Right ventricle myocardium inferior (tissue), 1 donor: ENCODE measurements at regions of chr11 and their contacts with region 1.

Region 1: GRCh38 chr11:86559311-86559945 is 113.0 kb downstream of the ME3 start:
- DNase-seq: no peak
- ATAC-seq: peak; percentile 75

Region 2: DNA sequence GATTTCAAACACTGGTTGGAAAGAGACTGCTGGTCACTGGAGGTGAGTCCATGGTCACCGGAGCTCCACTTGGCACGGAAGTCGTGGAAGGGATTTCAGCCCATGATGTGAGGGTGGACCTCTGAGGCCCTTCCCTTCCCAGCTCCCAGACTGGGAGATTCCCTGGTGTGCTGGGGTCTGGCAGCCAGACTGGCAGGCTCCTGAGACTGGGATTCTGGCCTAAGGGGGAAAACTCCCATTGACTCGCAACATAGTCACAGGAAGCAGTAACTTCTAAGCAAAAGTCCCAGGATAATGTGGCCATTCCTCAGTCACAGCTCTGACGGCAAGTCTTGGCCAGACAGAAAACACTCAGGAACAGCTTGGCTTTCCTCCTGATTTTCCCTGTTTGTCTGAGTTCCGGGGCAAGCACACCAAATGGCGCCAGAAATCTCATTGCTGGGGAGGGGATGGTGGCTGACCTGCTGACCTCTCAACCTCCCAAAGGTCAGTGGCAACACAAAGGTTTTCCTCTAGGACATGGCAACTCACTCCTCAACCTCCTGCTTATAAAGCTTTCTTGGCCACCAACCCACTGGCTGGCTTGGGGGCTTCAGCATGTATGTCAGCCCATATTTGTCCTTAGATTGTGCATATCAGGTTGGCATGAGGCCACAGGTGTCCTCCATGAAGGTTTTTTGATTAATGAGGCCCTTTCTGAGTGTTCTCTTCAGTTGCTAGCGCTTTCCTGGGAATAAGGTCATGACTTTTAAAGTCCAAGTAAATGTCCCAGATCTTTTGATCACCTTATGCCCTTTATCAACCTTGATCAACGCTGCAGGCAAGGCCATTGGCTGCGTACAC is 85.2 kb before region 1 on chr11:
- intact Hi-C with region 1: loop called (anchors 5 kb)
- DNase-seq: no peak
- ATAC-seq: peak; percentile 20